ENCODE measurements at regions of chr2 and their contacts with region 1.

Region 1: GRCh38 chr2:168455648-168456520 is at the start of gene CERS6:
- DNase-seq: peak; percentile 95
- ATAC-seq: peak; percentile 92
- H3K4me3 Mint-ChIP-seq: no peak within 1 kb of the TSS
- H3K27ac Mint-ChIP-seq: peak within 1 kb of the TSS; percentile 87
- H3K4me1 Mint-ChIP-seq: peaks cover 38% of the 10 kb centered on the region
- H3K27me3 Mint-ChIP-seq: peaks cover 2% of the 10 kb centered on the region
- total RNA-seq, gene CERS6: 12.9 to 13.1 TPM

Region 2: DNA sequence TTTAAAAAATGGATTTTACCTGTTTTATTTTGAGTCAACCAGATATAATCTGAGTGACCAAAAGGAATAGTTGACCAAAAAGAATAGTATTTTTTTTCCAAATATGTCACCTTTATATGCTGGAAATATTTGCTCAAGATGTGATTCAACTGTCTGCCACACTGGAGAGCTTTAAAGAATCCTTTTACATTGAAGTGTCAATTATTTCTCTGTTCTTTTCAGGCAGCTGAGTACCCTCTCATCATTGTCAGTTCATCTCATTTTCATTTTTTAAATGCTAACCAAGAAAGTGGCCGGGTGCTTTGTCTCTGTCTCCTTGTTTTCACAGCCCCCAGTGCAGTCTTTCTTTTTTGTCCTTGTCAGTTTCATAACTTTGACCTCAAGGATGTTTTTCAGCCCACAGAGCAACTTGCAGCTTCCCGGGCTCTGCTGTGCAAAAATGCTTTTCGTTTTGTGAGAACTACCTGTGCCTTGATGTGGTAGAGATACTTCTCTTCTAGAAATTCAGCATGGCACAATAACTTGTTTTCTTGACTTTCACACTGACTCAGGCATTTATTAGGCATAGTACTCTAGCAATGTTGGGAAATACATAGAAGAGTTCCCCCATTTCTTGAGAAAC is 23.2 kb before region 1 on chr2:
- CTCF ChIA-PET with region 1: interaction called, 3 read pairs
- POLR2A ChIA-PET with region 1: no interaction called
- intact Hi-C with region 1: loop called in 1 of 2 experiments (anchors 2 kb)
- DNase-seq: peak; percentile 47
- ATAC-seq: peak; percentile 76
- H3K4me3 Mint-ChIP-seq: peak overlapping the region; percentile 41
- H3K27ac Mint-ChIP-seq: peak overlapping the region; percentile 37
- H3K4me1 Mint-ChIP-seq: peaks cover 52% of the 10 kb centered on the region
- H3K27me3 Mint-ChIP-seq: no peaks in the 10 kb centered on the region

Region 3: GRCh38 chr2:168495524-168495923 is 39.6 kb after region 1 on chr2:
- CTCF ChIA-PET with region 1: no interaction called
- POLR2A ChIA-PET with region 1: no interaction called
- intact Hi-C with region 1: loop called (anchors 1 to 2 kb)
- DNase-seq: peak; percentile 18
- ATAC-seq: peak; percentile 80
- H3K4me3 Mint-ChIP-seq: no peak overlapping the region
- H3K27ac Mint-ChIP-seq: no peak overlapping the region
- H3K4me1 Mint-ChIP-seq: peaks cover 53% of the 10 kb centered on the region
- H3K27me3 Mint-ChIP-seq: peaks cover 4% of the 10 kb centered on the region